Lower leg skin (tissue), 4 donors: ENCODE measurements at regions of chr9 and their contacts with region 1.

Region 1: DNA sequence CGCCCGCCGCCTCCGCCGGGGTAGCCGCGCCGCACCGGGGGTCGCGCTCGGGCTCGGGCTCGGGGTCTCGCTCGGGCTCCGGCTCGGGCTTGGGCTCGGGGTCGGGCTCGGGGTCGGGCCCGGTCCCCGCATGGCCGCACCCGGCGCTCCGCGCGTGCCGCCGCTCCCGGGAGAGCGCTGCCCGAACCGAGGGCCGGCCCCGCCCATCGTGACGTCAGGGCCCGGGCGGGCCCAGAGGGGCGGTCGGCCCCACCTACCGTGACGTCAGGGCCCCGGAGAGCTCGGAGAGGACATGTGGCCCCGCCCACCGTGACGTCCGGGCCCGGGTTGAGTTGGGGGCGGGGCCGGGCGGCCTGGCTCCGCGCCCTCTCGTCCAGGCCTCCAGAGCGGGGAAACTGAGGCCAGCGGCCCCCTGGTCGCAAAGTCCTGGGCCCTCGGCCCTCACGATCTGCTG is at the start of gene NSMF:
- DNase-seq: peak; percentile 90 to 98
- H3K4me3 ChIP-seq: peak within 1 kb of the TSS; percentile 46
- CTCF ChIP-seq: no peak
- POLR2A ChIP-seq: peak in 1 of 2 donors; percentile 5
- total RNA-seq, gene NSMF: 18.6 to 41.8 (median 24.3) TPM

Region 2: GRCh38 chr9:137611623-137612463 is 152.7 kb after region 1 on chr9:
- intact Hi-C with region 1: loop called (anchors 5 kb)
- DNase-seq: peak; percentile 87 to 93
- H3K4me3 ChIP-seq: no peak overlapping the region
- CTCF ChIP-seq: no peak
- POLR2A ChIP-seq: no peak